Calu3 (cell line): ENCODE measurements at regions of chr1 and their contacts with region 1.

Region 1: GRCh38 chr1:87358219-87358618 is 29.5 kb downstream of the LMO4 start:
- DNase-seq: no peak
- H3K4me3 Mint-ChIP-seq: no peak overlapping the region
- H3K27ac Mint-ChIP-seq: no peak overlapping the region
- H3K4me1 Mint-ChIP-seq: no peaks in the 10 kb centered on the region
- H3K27me3 Mint-ChIP-seq: no peaks in the 10 kb centered on the region
- CTCF ChIP-seq: no peak

Region 2: GRCh38 chr1:87386217-87386790 is 28.1 kb after region 1 on chr1:
- CTCF ChIA-PET with region 1: no interaction called
- intact Hi-C with region 1: loop called (anchors 1 kb)
- DNase-seq: no peak
- H3K4me3 Mint-ChIP-seq: no peak overlapping the region
- H3K27ac Mint-ChIP-seq: no peak overlapping the region
- H3K4me1 Mint-ChIP-seq: peaks cover 8% of the 10 kb centered on the region
- H3K27me3 Mint-ChIP-seq: no peaks in the 10 kb centered on the region
- CTCF ChIP-seq: no peak